Calu3 (cell line): ENCODE measurements at regions of chr16 and their contacts with region 1.

Region 1: GRCh38 chr16:80639641-80640040 is 98.8 kb downstream of the DYNLRB2 start:
- DNase-seq: no peak
- H3K4me3 Mint-ChIP-seq: no peak overlapping the region
- H3K27ac Mint-ChIP-seq: no peak overlapping the region
- H3K4me1 Mint-ChIP-seq: no peaks in the 10 kb centered on the region
- H3K27me3 Mint-ChIP-seq: no peaks in the 10 kb centered on the region
- CTCF ChIP-seq: no peak

Region 2: DNA sequence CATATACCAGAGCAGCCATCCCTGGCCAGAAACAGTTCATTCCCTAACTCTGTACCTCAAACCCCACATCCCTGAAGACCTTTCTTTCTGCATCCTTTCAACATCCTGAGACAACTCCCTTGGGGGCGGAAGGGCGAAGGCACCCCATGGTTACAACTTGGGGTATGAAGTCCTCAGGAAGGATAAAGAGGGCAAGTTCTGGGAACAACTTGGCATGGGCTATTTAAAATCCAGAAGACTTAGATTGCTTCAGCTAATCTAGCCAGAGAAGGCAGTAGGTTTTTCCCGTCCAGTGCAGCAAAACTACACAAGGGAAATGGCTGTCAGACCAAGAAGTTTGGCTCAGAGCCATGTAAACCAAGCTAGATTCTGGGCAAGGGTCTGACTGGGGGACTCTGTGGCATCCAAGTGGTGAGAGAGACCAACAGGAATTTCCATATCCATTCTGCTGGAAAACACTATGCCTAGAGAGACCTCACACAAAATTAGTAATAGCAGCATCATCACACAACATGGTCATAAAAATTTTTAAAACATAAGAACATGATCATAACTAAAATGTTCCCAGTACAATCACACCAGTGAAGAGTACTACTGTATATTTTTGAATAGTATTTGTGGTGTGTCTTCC is 51.6 kb after region 1 on chr16:
- CTCF ChIA-PET with region 1: no interaction called
- intact Hi-C with region 1: loop called (anchors 5 kb)
- DNase-seq: no peak
- H3K4me3 Mint-ChIP-seq: no peak overlapping the region
- H3K27ac Mint-ChIP-seq: no peak overlapping the region
- H3K4me1 Mint-ChIP-seq: no peaks in the 10 kb centered on the region
- H3K27me3 Mint-ChIP-seq: peaks cover 21% of the 10 kb centered on the region
- CTCF ChIP-seq: no peak

Region 3: DNA sequence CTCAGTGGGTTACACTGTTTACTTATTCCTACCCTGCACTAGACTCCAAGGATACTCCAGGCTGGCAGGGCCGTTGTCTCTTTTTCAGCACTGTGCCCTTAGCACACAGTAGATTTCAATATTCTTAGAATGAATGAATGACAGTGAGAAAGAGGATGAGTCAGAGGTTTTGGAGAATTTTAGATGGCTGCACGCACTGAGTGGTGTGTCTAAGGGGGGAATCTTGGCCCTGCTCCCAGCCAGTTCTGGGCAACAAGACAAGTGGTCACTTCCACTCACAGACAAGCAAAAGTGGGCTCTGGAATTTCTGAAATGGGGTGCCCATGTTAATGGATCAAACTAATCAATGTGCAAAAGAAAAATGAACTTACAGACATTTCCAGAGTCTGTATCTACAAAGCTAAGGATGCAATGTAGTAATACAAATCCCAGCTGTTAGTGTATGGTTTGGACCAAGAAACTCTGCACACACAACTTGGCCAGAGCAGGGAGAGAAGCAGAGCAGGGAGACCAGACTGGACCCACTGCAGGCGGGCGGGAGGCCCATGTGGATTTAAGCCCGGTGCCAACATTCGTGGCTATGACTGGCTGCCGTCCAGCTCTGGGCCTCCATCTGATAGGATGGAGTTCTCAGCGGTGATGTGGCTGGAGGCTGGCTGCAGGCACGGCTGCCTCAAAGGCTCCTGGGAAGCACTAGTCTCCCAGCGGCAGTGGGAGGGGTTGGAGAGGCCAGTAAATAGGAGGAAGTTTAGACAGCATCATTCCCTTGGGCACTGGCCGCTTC is 260.4 kb after region 1 on chr16:
- CTCF ChIA-PET with region 1: no interaction called
- intact Hi-C with region 1: no loop called
- DNase-seq: peak; percentile 48
- H3K4me3 Mint-ChIP-seq: no peak overlapping the region
- H3K27ac Mint-ChIP-seq: no peak overlapping the region
- H3K4me1 Mint-ChIP-seq: no peaks in the 10 kb centered on the region
- H3K27me3 Mint-ChIP-seq: peaks cover 36% of the 10 kb centered on the region
- CTCF ChIP-seq: no peak

Region 4: GRCh38 chr16:80938035-80938865 is 298.6 kb after region 1 on chr16:
- CTCF ChIA-PET with region 1: no interaction called
- intact Hi-C with region 1: no loop called
- DNase-seq: no peak
- H3K4me3 Mint-ChIP-seq: no peak overlapping the region
- H3K27ac Mint-ChIP-seq: no peak overlapping the region
- H3K4me1 Mint-ChIP-seq: no peaks in the 10 kb centered on the region
- H3K27me3 Mint-ChIP-seq: peaks cover 36% of the 10 kb centered on the region
- CTCF ChIP-seq: no peak

Region 5: DNA sequence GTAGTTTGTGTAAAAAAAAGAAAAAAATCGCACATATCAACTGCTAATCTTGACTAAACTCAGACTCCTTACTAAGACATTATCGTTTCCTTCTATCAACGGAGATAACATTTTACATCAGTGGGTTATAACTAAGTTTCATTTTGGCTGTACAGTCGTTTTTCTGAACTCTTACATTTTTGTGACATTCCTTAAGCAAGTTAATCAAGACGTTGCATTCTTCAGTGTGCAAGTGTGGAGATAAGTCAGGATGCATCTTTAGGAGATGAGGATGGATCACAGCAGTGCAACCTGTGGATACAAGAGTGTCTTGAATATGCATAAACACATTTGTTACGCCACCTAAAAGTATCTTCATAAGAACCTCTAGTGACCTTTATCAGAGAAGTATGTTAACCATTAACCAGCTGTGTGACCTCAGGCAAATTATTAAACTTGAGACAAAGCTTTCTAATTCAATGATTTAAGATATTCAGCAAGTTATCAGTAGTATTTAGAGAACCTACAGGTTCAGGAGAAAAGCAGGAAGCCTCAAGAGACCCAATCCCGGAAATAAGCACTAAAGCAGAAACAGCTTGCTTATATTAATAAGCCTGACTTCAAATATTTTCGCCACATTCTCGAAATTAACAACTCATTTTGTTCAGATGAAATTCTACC is 357.6 kb after region 1 on chr16:
- CTCF ChIA-PET with region 1: no interaction called
- intact Hi-C with region 1: no loop called
- DNase-seq: peak; percentile 28
- H3K4me3 Mint-ChIP-seq: peak overlapping the region; percentile 27
- H3K27ac Mint-ChIP-seq: peak overlapping the region; percentile 21
- H3K4me1 Mint-ChIP-seq: peaks cover 72% of the 10 kb centered on the region
- H3K27me3 Mint-ChIP-seq: no peaks in the 10 kb centered on the region
- CTCF ChIP-seq: no peak